Aorta (tissue), 5 donors: ENCODE measurements at regions of chr6 and their contacts with region 1.

Region 1: DNA sequence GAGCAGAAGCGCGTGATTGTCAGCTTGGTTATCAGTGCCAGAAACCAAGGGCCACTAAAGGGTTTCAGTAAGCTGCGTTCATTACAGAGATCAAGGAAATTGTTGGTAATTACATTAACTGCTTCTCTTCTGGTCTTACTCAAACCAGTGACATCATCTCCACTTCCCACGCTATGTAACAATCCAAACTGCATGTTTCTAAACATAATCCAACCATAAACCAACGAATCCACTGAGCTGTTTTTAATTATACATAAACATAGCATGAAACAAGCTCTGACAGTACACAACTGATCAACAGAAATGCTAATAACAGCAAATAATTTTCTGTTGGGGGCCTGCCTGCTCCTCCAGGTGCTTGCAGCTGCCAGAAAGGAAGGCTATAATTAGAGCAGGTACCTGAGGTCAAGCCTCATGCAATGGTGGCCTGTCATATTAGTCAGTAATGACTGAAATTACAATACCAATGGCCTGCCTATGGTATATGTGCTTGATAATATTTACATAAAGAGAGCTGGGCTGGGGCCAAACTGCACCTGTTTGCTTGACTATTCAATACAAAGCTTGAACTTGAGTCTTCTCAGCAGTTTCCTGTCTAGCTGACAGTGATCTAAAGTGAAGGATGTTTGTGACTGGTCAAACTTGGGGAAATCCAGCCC is 40.1 kb downstream of the ILRUN start:
- DNase-seq: no peak
- ATAC-seq: peak; percentile 37
- H3K4me3 ChIP-seq: peak overlapping the region in 1 of 2 donors; percentile 60
- H3K27ac ChIP-seq: peak overlapping the region; percentile 59 to 93
- H3K4me1 ChIP-seq: peaks cover 8 to 9% of the 10 kb centered on the region in 2 donors
- H3K27me3 ChIP-seq: no peaks in the 10 kb centered on the region

Region 2: DNA sequence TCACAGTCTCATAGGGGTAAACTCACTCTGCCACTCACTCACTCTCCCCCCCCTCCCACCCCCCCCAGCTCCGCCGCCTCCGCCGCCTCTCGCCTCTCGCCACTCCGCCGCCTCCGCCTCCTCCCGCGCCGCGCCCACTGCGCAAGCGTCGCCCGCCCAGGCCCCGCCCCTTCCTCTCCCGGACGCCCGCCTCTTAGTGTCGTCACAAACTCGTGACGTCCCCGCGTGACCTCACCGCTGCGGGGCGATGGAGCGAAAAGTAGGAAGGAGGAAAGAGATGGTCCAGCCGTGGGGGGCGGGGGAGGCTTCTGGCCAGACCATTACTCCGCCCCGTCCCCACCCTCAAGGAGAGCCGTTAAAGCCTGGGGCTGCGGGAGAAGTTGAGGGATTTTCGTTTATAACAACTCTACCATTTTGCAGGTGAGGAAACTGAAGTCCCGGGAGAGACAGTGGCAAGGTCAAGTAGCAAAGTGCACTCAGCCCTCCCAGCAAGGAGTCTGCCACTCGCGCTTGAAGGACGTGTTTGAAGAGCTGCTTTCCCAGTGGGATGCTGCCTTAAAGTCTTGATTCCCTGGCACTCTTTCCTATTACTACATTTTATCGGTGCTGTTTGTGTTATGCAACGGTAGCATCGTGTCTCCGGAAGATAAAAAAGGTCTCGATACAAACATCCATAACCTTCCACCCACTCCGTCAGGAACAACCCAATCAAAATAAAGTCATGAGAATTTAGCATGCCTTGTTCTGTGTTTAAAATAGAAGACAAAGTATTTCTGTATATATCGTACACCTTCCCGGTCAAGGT is 40.4 kb after region 1 on chr6 and contains the start of gene ILRUN:
- intact Hi-C with region 1: loop called in 1 of 2 experiments (anchors 5 kb)
- DNase-seq: peak; percentile 98 to 99
- ATAC-seq: peak; percentile 97
- H3K4me3 ChIP-seq: peak within 1 kb of the TSS; percentile 89 to 93
- H3K27ac ChIP-seq: peak within 1 kb of the TSS; percentile 59 to 89
- H3K4me1 ChIP-seq: peaks cover 0 to 4% of the 10 kb centered on the region in 2 donors
- H3K27me3 ChIP-seq: no peaks in the 10 kb centered on the region
- total RNA-seq, gene ILRUN: 69.7 to 76.6 TPM